Dorsolateral prefrontal cortex (tissue), 120 donors: ENCODE measurements at regions of chr15 and their contacts with region 1.

Region 1: DNA sequence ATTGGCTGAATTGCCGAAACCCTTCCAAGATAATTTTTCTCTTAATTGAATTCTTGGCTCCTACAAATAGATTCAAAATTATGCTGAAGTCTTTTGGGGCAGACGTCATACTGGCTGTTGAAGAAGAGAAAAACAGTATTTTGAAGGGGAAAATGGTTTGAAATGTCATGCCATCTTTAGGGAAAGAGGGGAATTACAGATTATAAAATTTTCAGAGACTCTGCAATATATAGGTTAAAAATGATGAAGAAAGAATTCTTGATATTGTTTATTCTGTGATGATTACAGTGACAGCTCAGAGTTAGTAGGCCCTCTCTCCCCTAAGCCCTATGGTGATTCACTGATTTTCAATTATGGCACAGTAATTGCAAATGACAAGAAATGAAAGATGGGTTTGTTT is 86.1 kb downstream of the CGNL1 start:
- DNase-seq: no peak
- H3K4me3 ChIP-seq: no peak overlapping the region
- H3K27ac ChIP-seq: peak overlapping the region in 37 of 59 donors; percentile 9 to 86 (median 67)
- H3K27me3 ChIP-seq: no peaks in the 10 kb centered on the region
- CTCF ChIP-seq: peak in 52 of 56 donors; percentile 10 to 63 (median 39)

Region 2: DNA sequence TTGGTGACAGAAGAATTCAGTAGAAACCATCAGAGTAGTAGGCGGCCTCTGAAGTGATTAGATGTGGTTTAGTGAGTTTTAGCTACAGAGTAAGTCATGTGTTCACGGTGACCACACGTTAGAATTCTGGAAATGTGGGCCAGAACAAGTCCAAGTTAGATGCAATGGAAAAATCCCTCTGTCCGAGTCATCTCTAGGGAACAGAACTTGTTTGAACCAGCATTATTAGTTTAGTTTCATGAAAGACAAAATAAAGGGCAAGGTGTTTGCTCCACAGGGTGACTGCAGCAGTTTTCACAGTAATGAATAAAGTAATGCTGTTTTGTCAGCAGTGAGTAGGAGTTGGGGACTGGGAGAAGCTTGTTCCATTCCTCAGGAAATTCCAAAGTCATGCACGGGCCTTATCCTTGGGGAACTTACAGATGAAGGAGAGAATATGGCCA is 14.2 kb after region 1 on chr15:
- intact Hi-C with region 1: no loop called
- DNase-seq: no peak
- H3K4me3 ChIP-seq: no peak overlapping the region
- H3K27ac ChIP-seq: peak overlapping the region in 1 of 59 donors; percentile 5
- H3K27me3 ChIP-seq: no peaks in the 10 kb centered on the region
- CTCF ChIP-seq: no peak

Region 3: DNA sequence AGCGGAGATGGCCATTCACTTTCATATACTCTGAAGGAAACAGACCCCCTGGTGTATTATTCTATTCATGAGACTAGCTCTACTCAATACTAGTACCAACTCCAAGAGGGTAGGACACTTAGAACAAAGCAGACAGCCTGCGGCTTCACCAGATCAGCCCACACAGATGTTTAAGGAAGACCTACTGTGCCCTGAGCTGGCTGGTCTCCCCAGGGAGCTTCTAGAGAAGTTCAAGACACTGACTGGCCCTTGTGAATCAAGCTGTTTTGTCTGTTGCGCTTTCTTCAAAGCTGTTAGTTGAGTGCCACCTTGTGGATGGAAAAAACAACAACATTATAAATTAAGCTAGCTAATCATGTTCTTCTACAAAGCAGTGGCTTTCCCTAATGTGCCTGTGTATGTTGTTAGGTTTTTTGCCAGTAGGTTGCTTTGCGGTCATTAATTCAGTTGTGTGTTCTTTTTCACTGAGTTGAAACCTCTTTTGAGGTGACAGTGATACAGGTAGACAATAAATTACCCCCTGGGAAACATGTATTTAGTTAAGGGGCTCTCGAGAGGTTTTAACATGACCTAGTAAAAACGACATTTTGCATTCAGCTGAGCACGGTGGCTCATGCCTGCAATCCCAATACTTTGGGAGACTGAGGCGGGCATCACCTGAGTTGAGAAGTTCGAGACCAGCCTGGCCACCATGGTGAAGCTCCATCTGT is 65.2 kb after region 1 on chr15:
- intact Hi-C with region 1: loop called in 1 of 2 experiments (anchors 10 kb)
- DNase-seq: peak in 1 of 10 donors; percentile 36
- H3K4me3 ChIP-seq: no peak overlapping the region
- H3K27ac ChIP-seq: peak overlapping the region in 16 of 59 donors; percentile 4 to 68 (median 40)
- H3K27me3 ChIP-seq: peaks cover 0 to 2% (median 0%) of the 10 kb centered on the region in 45 donors
- CTCF ChIP-seq: peak; percentile 58 to 97 (median 79)